HCT116 (cell line): ENCODE measurements at regions of chr9 and their contacts with region 1.

Region 1: GRCh38 chr9:98045234-98046179 is 11.0 kb upstream of the NANS start:
- DNase-seq: peak; percentile 87
- ATAC-seq: peak; percentile 90
- H3K4me3 ChIP-seq: peak overlapping the region; percentile 76 to 80
- H3K27ac ChIP-seq: peak overlapping the region; percentile 57
- H3K4me1 ChIP-seq: peaks cover 4 to 24% of the 10 kb centered on the region in 2 experiments; a peak in 3 of 4 replicates
- H3K27me3 ChIP-seq: no peaks in the 10 kb centered on the region
- CTCF ChIP-seq: peak in 2 of 3 experiments; percentile 27 to 34; a peak in 1 of 6 replicates
- POLR2A ChIP-seq: peak; percentile 93
- RAD21 ChIP-seq: no peak

Region 2: DNA sequence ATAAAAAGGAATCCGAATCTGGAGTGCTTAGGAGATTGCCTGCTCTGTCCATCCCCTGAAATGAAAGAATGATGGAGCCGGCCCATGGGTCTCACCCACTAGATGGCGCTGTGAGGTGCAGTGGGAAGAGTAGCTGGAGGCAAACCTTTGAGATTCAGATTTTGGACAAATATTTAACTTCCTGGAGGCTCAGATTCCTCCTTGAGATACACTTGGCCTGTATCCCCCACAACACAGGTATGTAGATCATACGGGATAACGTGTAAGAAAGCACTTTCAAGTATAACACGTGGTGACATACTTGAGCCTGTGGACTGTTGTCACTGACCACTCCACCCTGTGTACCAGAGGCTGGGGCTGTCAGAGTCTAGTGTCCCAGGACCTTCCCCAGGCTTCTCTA is 155.5 kb before region 1 on chr9:
- CTCF ChIA-PET with region 1: no interaction called
- POLR2A ChIA-PET with region 1: no interaction called
- RAD21 ChIA-PET with region 1: no interaction called
- intact Hi-C with region 1: no loop called
- DNase-seq: no peak
- ATAC-seq: peak; percentile 89
- H3K4me3 ChIP-seq: no peak overlapping the region
- H3K27ac ChIP-seq: no peak overlapping the region
- H3K4me1 ChIP-seq: no peaks in the 10 kb centered on the region
- H3K27me3 ChIP-seq: no peaks in the 10 kb centered on the region
- CTCF ChIP-seq: peak; percentile 39 to 97 (median 94); a peak in 5 of 6 replicates
- POLR2A ChIP-seq: no peak
- RAD21 ChIP-seq: peak; percentile 42; the same call in 1 of the 2 replicates

Region 3: DNA sequence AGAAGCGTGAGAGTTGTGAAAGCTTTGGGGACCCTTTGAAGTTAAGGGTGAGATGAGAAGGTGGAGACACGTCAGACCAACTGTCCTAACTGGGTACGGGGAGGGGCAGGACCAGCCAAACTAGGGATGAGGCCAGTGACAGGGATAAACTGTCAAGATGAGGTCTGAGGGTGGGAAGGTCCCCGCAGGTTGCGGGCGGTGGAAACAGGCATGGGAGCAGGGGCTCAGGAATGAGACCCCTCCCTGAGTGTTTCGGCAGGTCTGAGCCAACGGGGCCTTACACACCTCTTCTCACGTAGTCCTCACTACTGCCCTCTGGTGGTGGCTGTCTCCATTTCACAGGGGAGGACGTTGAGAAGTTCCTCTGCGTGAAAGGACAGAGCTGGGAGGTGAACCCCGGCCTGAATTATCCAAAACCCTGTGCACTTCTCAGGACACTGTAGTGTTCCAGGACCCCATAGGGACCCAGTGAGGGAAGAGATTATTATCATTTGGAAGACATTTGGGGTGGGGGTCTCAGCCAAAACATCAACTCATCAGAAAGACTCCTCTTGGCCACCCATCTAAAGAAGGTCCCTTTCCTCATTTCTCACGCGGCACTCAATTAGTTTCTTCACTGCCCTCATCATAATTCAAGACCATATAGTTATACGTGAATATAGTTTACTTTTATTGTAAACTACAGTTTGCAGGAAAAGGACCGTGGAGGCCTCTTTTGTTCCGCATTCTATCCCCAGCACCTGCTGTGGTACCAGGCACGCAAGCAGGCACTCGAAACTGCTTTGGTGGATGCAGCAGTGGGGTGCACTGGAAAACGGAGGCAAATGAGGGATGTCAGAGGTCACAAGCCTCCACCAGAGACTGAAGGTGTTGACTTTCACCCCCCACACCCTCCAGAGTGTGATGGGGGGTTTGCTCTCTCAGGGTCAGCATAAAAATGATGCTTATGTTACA is 10.6 kb before region 1 on chr9:
- CTCF ChIA-PET with region 1: interaction called, 13 read pairs
- POLR2A ChIA-PET with region 1: interaction called, 8 read pairs
- RAD21 ChIA-PET with region 1: no interaction called
- intact Hi-C with region 1: no loop called
- DNase-seq: peak; percentile 76
- ATAC-seq: peak; percentile 97
- H3K4me3 ChIP-seq: 0 out of 4 replicates have a peak overlapping the region, but pooled peaks of 1 of the 2 experiments have one; percentile 4
- H3K27ac ChIP-seq: no peak overlapping the region
- H3K4me1 ChIP-seq: peaks cover 0 to 31% of the 10 kb centered on the region in 2 experiments; a peak in 2 of 4 replicates
- H3K27me3 ChIP-seq: no peaks in the 10 kb centered on the region
- CTCF ChIP-seq: peak; percentile 64 to 89 (median 85)
- POLR2A ChIP-seq: no peak
- RAD21 ChIP-seq: peak; percentile 49

Region 4: GRCh38 chr9:98056269-98057137 is 11.0 kb after region 1 on chr9 and contains the start of gene NANS:
- CTCF ChIA-PET with region 1: interaction called, 8 read pairs
- POLR2A ChIA-PET with region 1: interaction called, 73 read pairs
- RAD21 ChIA-PET with region 1: no interaction called
- intact Hi-C with region 1: no loop called
- DNase-seq: peak; percentile 95
- ATAC-seq: peak; percentile 93
- H3K4me3 ChIP-seq: peak within 1 kb of the TSS; percentile 73 to 91
- H3K27ac ChIP-seq: peak within 1 kb of the TSS; percentile 78
- H3K4me1 ChIP-seq: peaks cover 9 to 33% of the 10 kb centered on the region in 2 experiments; a peak in 3 of 4 replicates
- H3K27me3 ChIP-seq: no peaks in the 10 kb centered on the region
- CTCF ChIP-seq: no peak
- POLR2A ChIP-seq: no peak
- RAD21 ChIP-seq: 0 out of 2 replicates have a peak, but pooled peaks have one; percentile 7
- total RNA-seq, gene NANS: 48.9 TPM